ENCODE measurements at regions of chr1 and their contacts with region 1.

Region 1: DNA sequence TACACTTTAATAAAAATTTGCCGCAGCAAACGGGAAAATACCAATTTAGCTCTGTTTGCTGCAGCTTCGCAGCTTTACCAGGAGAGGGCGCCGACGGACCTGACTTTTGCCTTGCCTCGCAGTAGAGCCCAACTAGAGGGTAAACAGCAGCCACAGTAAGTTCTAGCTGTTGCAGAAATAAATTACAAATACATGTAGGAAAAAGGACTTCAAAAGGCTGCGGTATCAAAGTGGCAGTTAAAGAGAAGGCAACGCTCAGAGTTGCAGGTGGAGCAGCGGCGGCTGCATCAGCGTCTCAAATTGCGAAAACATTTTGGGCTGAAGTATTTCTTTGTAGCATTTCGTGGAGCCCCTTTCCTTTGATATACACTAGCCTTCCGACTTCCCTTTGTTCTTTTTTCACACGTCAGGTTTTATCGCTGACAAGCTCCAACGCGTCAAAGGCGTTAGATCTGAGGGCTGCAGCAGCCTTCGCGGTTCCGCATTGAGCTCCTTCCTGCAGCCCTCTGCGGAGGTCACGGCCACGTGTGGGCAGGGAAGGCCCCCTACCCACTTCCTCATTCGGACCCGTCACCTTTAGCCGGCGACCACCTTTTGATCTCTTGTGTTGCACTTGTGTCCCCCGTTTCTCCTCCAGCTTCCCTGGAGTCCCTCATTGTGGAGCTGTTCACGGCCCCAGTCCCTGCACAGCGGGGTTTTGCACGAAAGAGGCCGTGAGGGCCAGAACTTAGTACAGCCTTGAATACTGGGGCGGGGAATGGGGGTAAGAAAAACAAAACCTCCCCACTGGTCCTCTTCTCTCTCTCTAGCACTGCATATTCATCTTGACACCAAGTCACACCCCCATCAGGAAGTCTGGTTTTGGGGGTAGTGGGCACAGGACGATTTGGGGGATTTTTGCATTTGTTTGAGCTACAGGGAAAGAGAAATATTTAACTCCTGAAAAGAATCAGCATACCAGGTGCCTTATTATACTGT is 72.8 kb downstream of the S1PR1 start:
- DNase-seq: peak; percentile 53 to 95 (median 91)
- ATAC-seq: peak; percentile 86
- H3K4me3 ChIP-seq: peak overlapping the region; percentile 42
- H3K4me3 Mint-ChIP-seq: peak overlapping the region; percentile 74 to 89 (median 85)
- H3K27ac ChIP-seq: peak overlapping the region; percentile 92
- H3K27ac Mint-ChIP-seq: peak overlapping the region; percentile 93 to 99 (median 98)
- H3K4me1 ChIP-seq: peaks cover 46 to 53% of the 10 kb centered on the region in 2 donors
- H3K4me1 Mint-ChIP-seq: peaks cover 43 to 79% (median 66%) of the 10 kb centered on the region in 7 donors
- H3K27me3 ChIP-seq: no peaks in the 10 kb centered on the region
- H3K27me3 Mint-ChIP-seq: peaks cover 0 to 22% (median 0%) of the 10 kb centered on the region in 5 donors

Region 2: GRCh38 chr1:101112051-101112780 is 197.4 kb before region 1 on chr1:
- CTCF ChIA-PET with region 1: interaction called, 3 read pairs
- POLR2A ChIA-PET with region 1: interaction called, 3 read pairs
- intact Hi-C with region 1: loop called in 1 of 2 experiments (anchors 1 kb)
- DNase-seq: peak; percentile 29 to 95 (median 91)
- ATAC-seq: peak; percentile 97
- H3K4me3 ChIP-seq: peak overlapping the region; percentile 33
- H3K4me3 Mint-ChIP-seq: peak overlapping the region; percentile 32 to 85 (median 78)
- H3K27ac ChIP-seq: peak overlapping the region; percentile 84
- H3K27ac Mint-ChIP-seq: peak overlapping the region; percentile 95 to 100 (median 99)
- H3K4me1 ChIP-seq: peaks cover 23 to 43% of the 10 kb centered on the region in 2 donors
- H3K4me1 Mint-ChIP-seq: peaks cover 32 to 79% (median 71%) of the 10 kb centered on the region in 7 donors
- H3K27me3 ChIP-seq: no peaks in the 10 kb centered on the region
- H3K27me3 Mint-ChIP-seq: no peaks in the 10 kb centered on the region

Region 3: GRCh38 chr1:101323535-101323934 is 13.9 kb after region 1 on chr1:
- CTCF ChIA-PET with region 1: interaction called, 12 read pairs
- POLR2A ChIA-PET with region 1: interaction called, 10 read pairs
- intact Hi-C with region 1: loop called in 1 of 2 experiments (anchors 1 kb)
- DNase-seq: no peak
- ATAC-seq: no peak
- H3K4me3 ChIP-seq: no peak overlapping the region
- H3K4me3 Mint-ChIP-seq: no peak overlapping the region
- H3K27ac ChIP-seq: no peak overlapping the region
- H3K27ac Mint-ChIP-seq: no peak overlapping the region
- H3K4me1 ChIP-seq: no peaks in the 10 kb centered on the region
- H3K4me1 Mint-ChIP-seq: peaks cover 0 to 8% (median 0%) of the 10 kb centered on the region in 7 donors
- H3K27me3 ChIP-seq: no peaks in the 10 kb centered on the region
- H3K27me3 Mint-ChIP-seq: peaks cover 0 to 65% (median 0%) of the 10 kb centered on the region in 5 donors

Region 4: DNA sequence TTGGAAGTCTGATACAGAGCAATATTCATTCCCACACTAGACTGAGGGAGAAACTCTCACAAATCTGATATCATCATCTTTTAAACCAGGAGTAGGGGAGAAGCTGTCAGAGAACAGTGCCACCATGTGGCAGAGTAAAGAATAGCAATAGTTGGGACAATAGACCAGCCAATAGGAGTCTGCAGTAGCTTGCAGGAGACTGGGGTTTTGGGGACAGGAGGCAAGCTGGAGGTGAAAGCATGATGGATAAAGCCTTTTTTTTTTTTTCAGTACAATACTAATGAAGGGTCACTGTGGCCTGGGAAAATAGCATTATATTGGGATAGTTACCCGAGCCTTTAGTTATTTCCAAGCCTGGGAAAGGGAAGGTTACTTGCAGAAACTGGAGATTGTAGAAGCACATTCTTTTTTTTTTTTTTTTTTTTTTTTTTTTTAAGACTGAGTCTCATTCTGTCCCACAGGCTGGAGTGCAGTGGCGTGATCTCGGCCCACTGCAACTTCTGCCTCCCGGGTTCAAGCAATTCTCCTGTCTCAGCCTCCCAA is 47.9 kb after region 1 on chr1:
- CTCF ChIA-PET with region 1: interaction called, 94 read pairs
- POLR2A ChIA-PET with region 1: interaction called, 40 read pairs
- intact Hi-C with region 1: loop called (anchors 1 kb)
- DNase-seq: peak; percentile 26 to 90 (median 85)
- ATAC-seq: peak; percentile 100
- H3K4me3 ChIP-seq: no peak overlapping the region
- H3K4me3 Mint-ChIP-seq: peak overlapping the region in 3 of 10 donors; percentile 1 to 84 (median 60)
- H3K27ac ChIP-seq: no peak overlapping the region
- H3K27ac Mint-ChIP-seq: peak overlapping the region in 8 of 9 donors; percentile 42 to 97 (median 80)
- H3K4me1 ChIP-seq: peaks cover 6 to 7% of the 10 kb centered on the region in 2 donors
- H3K4me1 Mint-ChIP-seq: peaks cover 5 to 12% (median 9%) of the 10 kb centered on the region in 7 donors
- H3K27me3 ChIP-seq: no peaks in the 10 kb centered on the region
- H3K27me3 Mint-ChIP-seq: peaks cover 0 to 19% (median 0%) of the 10 kb centered on the region in 5 donors

Region 5: DNA sequence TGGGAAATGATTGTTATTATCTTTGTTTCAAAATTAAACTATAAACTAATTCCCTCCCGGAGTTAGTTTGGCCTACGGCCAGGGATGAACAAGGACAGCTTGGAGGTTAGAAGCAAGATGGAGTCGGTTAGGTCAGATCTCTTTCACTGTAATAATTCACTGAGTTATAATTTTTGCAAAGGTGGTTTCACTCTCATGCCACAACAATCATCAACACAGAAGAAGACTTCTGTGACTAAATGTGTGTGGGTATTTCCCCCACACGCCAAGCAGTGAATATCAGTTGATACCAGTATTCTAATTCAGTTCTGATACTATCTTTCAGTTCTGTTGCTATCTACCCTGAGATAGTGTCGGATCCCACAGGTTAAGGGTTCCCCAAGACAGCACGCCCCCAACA is 142.3 kb after region 1 on chr1:
- CTCF ChIA-PET with region 1: interaction called, 3 read pairs
- POLR2A ChIA-PET with region 1: no interaction called
- intact Hi-C with region 1: loop called in 1 of 2 experiments (anchors 5 kb)
- DNase-seq: peak in 1 of 9 donors; percentile 25
- ATAC-seq: peak; percentile 54
- H3K4me3 ChIP-seq: no peak overlapping the region
- H3K4me3 Mint-ChIP-seq: peak overlapping the region in 3 of 10 donors; percentile 7 to 64 (median 8)
- H3K27ac ChIP-seq: no peak overlapping the region
- H3K27ac Mint-ChIP-seq: peak overlapping the region in 7 of 9 donors; percentile 10 to 85 (median 74)
- H3K4me1 ChIP-seq: peaks cover 12 to 17% of the 10 kb centered on the region in 2 donors
- H3K4me1 Mint-ChIP-seq: peaks cover 20 to 49% (median 38%) of the 10 kb centered on the region in 7 donors
- H3K27me3 ChIP-seq: no peaks in the 10 kb centered on the region
- H3K27me3 Mint-ChIP-seq: peaks cover 0 to 21% (median 4%) of the 10 kb centered on the region in 5 donors

Region 6: GRCh38 chr1:101532377-101532776 is 222.8 kb after region 1 on chr1:
- CTCF ChIA-PET with region 1: no interaction called
- POLR2A ChIA-PET with region 1: no interaction called
- intact Hi-C with region 1: no loop called
- DNase-seq: no peak
- ATAC-seq: no peak
- H3K4me3 ChIP-seq: no peak overlapping the region
- H3K4me3 Mint-ChIP-seq: no peak overlapping the region
- H3K27ac ChIP-seq: no peak overlapping the region
- H3K27ac Mint-ChIP-seq: no peak overlapping the region
- H3K4me1 ChIP-seq: no peaks in the 10 kb centered on the region
- H3K4me1 Mint-ChIP-seq: no peaks in the 10 kb centered on the region
- H3K27me3 ChIP-seq: no peaks in the 10 kb centered on the region
- H3K27me3 Mint-ChIP-seq: peaks cover 7 to 47% (median 16%) of the 10 kb centered on the region in 5 donors